ENCODE measurements at regions of chr2 and their contacts with region 1.

Region 1: GRCh38 chr2:25127646-25128045 is 40.7 kb downstream of the POMC start:
- DNase-seq: no peak
- H3K4me3 ChIP-seq: no peak overlapping the region
- H3K27ac ChIP-seq: no peak overlapping the region
- H3K4me1 ChIP-seq: no peaks in the 10 kb centered on the region
- H3K27me3 ChIP-seq: no peaks in the 10 kb centered on the region
- CTCF ChIP-seq: no peak
- POLR2A ChIP-seq: no peak

Region 2: GRCh38 chr2:24984912-24985311 is 142.7 kb before region 1 on chr2:
- intact Hi-C with region 1: loop called (anchors 5 kb)
- DNase-seq: peak; percentile 73
- H3K4me3 ChIP-seq: no peak overlapping the region
- H3K27ac ChIP-seq: peak overlapping the region; percentile 18 to 80
- H3K4me1 ChIP-seq: peaks cover 28% of the 10 kb centered on the region
- H3K27me3 ChIP-seq: no peaks in the 10 kb centered on the region
- CTCF ChIP-seq: no peak
- POLR2A ChIP-seq: no peak

Region 3: GRCh38 chr2:25041928-25042320 is 85.7 kb before region 1 on chr2 and contains the start of gene EFR3B:
- intact Hi-C with region 1: loop called (anchors 10 kb)
- DNase-seq: peak; percentile 97
- H3K4me3 ChIP-seq: peak within 1 kb of the TSS; percentile 60 to 82
- H3K27ac ChIP-seq: peak within 1 kb of the TSS; percentile 31 to 47
- H3K4me1 ChIP-seq: peaks cover 12% of the 10 kb centered on the region
- H3K27me3 ChIP-seq: no peaks in the 10 kb centered on the region
- CTCF ChIP-seq: peak in 1 of 3 experiments; percentile 12
- POLR2A ChIP-seq: no peak
- total RNA-seq, gene EFR3B: 3.6 to 3.7 TPM